T-cell (primary cell): ENCODE measurements at regions of chr9 and their contacts with region 1.

Region 1: GRCh38 chr9:112680731-112681402 is 37.0 kb downstream of the INIP start:
- DNase-seq: no peak
- ATAC-seq: no peak
- H3K4me3 ChIP-seq: no peak overlapping the region
- H3K4me3 Mint-ChIP-seq: no peak overlapping the region
- H3K27ac ChIP-seq: no peak overlapping the region
- H3K27ac Mint-ChIP-seq: no peak overlapping the region
- H3K4me1 ChIP-seq: peaks cover 2 to 3% of the 10 kb centered on the region in 2 experiments
- H3K4me1 Mint-ChIP-seq: peaks cover 7 to 18% (median 8%) of the 10 kb centered on the region in 3 donors
- H3K27me3 ChIP-seq: no peaks in the 10 kb centered on the region
- H3K27me3 Mint-ChIP-seq: no peaks in the 10 kb centered on the region

Region 2: DNA sequence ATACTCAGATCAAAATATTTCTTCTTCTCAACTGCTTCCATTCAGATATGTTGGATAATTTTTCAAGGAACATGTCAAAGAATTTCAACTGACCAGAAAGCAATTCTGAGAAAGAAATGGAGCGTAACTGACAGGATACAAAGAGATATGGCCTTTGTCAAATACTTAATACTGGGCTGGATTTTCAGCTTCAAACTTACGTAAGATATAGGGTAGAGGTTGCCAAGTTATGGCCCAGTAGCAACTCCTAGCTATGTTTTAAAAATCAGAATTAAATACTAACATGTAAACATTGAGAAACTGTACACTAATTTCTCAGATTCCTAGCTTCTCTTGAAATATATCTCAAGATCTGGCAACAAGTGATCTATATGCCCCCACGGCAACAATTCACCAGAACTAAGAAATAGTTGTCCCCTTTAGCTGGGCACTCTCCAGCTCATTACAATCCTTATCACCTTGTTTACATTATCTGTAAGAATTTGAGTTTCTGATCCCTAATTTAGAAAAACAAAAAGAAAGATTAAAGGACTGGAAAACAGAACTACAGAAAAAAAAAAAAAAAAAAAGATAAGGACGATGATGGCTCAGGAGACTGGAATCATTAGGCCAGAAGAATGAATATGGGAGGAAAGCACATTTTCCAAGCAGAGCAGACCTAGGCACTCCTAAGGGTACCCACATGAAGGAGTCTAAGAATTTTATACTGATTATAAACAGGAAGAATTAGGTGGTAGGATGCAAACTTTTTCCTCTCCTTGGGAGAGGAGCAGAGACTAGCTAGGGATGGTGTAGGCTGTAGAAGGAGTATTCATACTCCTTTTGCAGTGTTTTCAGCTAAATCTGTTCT is 14.1 kb after region 1 on chr9:
- CTCF ChIA-PET with region 1: no interaction called
- POLR2A ChIA-PET with region 1: interaction called in 1 of 2 experiments, 10 read pairs
- DNase-seq: no peak
- ATAC-seq: no peak
- H3K4me3 ChIP-seq: no peak overlapping the region
- H3K4me3 Mint-ChIP-seq: no peak overlapping the region
- H3K27ac ChIP-seq: no peak overlapping the region
- H3K27ac Mint-ChIP-seq: no peak overlapping the region
- H3K4me1 ChIP-seq: peaks cover 2 to 5% of the 10 kb centered on the region in 2 experiments
- H3K4me1 Mint-ChIP-seq: peaks cover 0 to 13% (median 10%) of the 10 kb centered on the region in 3 donors
- H3K27me3 ChIP-seq: no peaks in the 10 kb centered on the region
- H3K27me3 Mint-ChIP-seq: no peaks in the 10 kb centered on the region